PC-3 (cell line): ENCODE measurements at regions of chr22 and their contacts with region 1.

Region 1: DNA sequence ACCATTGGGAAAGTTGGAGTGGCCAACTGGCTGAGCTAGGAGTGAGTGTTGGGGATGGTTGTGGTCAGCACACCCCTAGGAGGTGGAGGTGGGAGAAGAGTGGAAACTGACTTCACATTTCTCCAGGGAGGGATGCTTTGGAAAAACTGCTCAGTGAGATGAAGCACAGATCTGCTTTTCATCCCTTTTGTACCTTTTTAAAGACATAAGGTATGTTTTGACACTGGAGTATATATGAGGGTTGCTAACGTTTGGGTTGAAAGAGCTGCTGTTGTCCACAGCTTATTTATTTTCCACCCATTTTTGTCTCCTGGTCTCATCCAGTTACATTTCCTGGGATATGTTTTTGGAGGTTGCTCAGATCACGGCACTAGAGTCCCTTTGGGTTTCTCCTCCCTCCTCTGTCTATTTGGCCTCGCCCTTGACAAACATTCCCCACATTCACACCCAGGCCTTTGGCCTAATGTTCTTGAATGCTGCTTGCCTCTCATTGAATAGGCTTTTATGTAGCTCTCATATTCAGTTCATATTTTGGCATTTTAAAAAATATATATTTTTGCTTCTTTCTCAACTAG is 8.3 kb downstream of the SREBF2 start:
- DNase-seq: peak; percentile 60
- ATAC-seq: peak; percentile 77
- H3K4me3 ChIP-seq: no peak overlapping the region; the same call in 1 of the 2 replicates
- H3K27ac ChIP-seq: peak overlapping the region; percentile 65
- H3K4me1 ChIP-seq: peaks cover 46% of the 10 kb centered on the region
- H3K27me3 ChIP-seq: no peaks in the 10 kb centered on the region
- CTCF ChIP-seq: no peak

Region 2: GRCh38 chr22:41857155-41857859 is 16.1 kb after region 1 on chr22:
- CTCF ChIA-PET with region 1: no interaction called
- POLR2A ChIA-PET with region 1: no interaction called
- intact Hi-C with region 1: loop called (anchors 2 kb)
- DNase-seq: peak; percentile 87
- ATAC-seq: peak; percentile 92
- H3K4me3 ChIP-seq: no peak overlapping the region
- H3K27ac ChIP-seq: peak overlapping the region; percentile 62
- H3K4me1 ChIP-seq: peaks cover 27% of the 10 kb centered on the region
- H3K27me3 ChIP-seq: no peaks in the 10 kb centered on the region
- CTCF ChIP-seq: peak; percentile 77